ENCODE measurements at regions of chr7 and their contacts with region 1.

Region 1: DNA sequence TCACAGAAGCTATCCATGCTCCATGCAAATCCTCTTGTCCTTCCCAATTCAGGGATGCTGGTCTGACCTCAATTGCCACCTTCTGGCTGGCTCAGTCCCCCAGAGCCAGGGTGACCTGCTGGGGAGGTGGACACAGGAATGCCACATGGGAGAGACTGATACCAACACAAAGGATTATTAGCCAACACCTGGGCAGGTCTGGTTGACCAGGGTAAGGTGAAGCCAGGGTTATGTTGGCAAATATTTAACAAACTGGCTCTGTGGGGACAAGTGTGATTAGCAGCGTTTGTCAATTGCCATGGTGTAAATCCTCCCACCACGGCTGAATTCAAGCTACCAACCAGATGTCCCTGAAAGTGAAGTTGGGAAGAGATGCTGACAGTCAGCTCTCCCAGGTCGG is 14.0 kb upstream of the CCL24 start:
- DNase-seq: no peak
- ATAC-seq: no peak
- H3K4me3 ChIP-seq: no peak overlapping the region
- H3K27ac ChIP-seq: no peak overlapping the region
- H3K4me1 ChIP-seq: no peaks in the 10 kb centered on the region
- H3K27me3 ChIP-seq: no peaks in the 10 kb centered on the region
- CTCF ChIP-seq: no peak
- POLR2A ChIP-seq: no peak

Region 2: GRCh38 chr7:75727881-75728592 is 99.6 kb before region 1 on chr7:
- intact Hi-C with region 1: loop called (anchors 5 kb)
- DNase-seq: peak; percentile 37 to 80 (median 56)
- ATAC-seq: peak; percentile 62
- H3K4me3 ChIP-seq: no peak overlapping the region
- H3K27ac ChIP-seq: peak overlapping the region in 2 of 4 donors; percentile 27 to 45
- H3K4me1 ChIP-seq: peaks cover 5% of the 10 kb centered on the region
- H3K27me3 ChIP-seq: no peaks in the 10 kb centered on the region
- CTCF ChIP-seq: no peak
- POLR2A ChIP-seq: no peak